ENCODE measurements at regions of chr12 and their contacts with region 1.

Region 1: DNA sequence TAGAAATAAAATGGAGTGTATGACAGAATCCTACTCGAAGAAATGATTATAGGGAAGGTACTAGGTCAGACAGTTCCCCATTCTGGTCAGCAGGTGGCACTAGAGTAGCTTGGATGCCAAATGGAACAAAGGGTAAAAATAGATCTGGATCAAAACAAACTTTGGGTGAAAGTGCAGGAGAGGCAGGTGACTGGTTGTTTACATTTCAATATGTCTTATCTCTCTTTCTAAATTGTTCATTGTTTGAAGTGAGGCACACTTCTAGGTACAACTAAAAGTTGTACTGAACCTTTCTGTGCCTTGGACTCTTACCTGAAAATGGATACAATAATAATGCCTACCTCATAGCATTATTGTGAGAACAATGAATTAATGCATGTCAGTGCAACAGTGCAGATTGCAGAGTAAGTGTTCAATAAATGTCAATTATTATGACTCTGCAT is 62.0 kb upstream of the OSBPL8 start:
- DNase-seq: peak; percentile 85
- ATAC-seq: peak; percentile 52
- H3K4me3 ChIP-seq: no peak overlapping the region
- H3K27ac ChIP-seq: no peak overlapping the region
- H3K4me1 ChIP-seq: peaks cover 23% of the 10 kb centered on the region
- H3K27me3 ChIP-seq: no peaks in the 10 kb centered on the region
- CTCF ChIP-seq: peak; percentile 97

Region 2: GRCh38 chr12:76790564-76791552 is 169.3 kb after region 1 on chr12:
- CTCF ChIA-PET with region 1: interaction called, 5 read pairs
- POLR2A ChIA-PET with region 1: no interaction called
- intact Hi-C with region 1: loop called (anchors 1 kb)
- DNase-seq: peak; percentile 57
- ATAC-seq: peak; percentile 65
- H3K4me3 ChIP-seq: no peak overlapping the region
- H3K27ac ChIP-seq: no peak overlapping the region
- H3K4me1 ChIP-seq: peaks cover 5% of the 10 kb centered on the region; the same call in 1 of the 2 replicates
- H3K27me3 ChIP-seq: no peaks in the 10 kb centered on the region
- CTCF ChIP-seq: peak; percentile 74

Region 3: GRCh38 chr12:76820888-76821482 is 199.4 kb after region 1 on chr12:
- CTCF ChIA-PET with region 1: interaction called, 4 read pairs
- POLR2A ChIA-PET with region 1: no interaction called
- intact Hi-C with region 1: loop called (anchors 1 kb)
- DNase-seq: peak; percentile 58
- ATAC-seq: peak; percentile 70
- H3K4me3 ChIP-seq: no peak overlapping the region
- H3K27ac ChIP-seq: no peak overlapping the region
- H3K4me1 ChIP-seq: no peaks in the 10 kb centered on the region
- H3K27me3 ChIP-seq: no peaks in the 10 kb centered on the region
- CTCF ChIP-seq: peak; percentile 88

Region 4: DNA sequence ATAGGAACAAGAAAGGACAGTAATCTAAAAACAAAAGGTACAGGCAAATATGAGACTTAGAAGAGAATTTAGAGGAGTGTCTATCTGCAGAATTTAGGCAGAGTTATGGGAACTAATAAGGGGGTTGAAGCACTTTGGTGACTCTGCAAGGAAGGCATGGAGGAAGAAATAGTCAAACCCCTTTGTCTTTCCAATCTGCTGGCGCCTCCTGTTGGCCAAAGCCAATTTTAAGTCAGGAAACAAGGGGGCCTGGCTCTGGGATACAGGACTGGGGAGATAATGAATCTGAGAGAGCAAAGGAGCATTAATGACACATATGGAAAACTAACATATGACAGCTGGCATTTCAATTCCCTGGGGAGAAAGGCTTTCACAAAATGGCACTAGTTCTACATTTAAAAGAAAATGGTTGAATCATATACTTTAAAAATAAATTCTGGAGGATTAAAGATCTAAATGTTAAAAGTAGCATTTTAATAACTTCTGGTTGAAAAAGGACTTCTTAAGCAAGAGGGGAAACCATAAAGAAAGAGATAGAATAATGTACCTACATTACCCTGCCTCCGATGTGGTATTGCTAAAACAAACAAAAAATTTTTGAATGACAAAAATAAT is 305.7 kb after region 1 on chr12:
- CTCF ChIA-PET with region 1: no interaction called
- POLR2A ChIA-PET with region 1: no interaction called
- intact Hi-C with region 1: loop called (anchors 10 kb)
- DNase-seq: peak; percentile 70
- ATAC-seq: peak; percentile 56
- H3K4me3 ChIP-seq: no peak overlapping the region
- H3K27ac ChIP-seq: no peak overlapping the region
- H3K4me1 ChIP-seq: no peaks in the 10 kb centered on the region
- H3K27me3 ChIP-seq: peaks cover 1% of the 10 kb centered on the region; the same call in 1 of the 2 replicates
- CTCF ChIP-seq: peak; percentile 85

Measured in PC-3 (cell line).